Transverse colon (tissue), 4 donors: ENCODE measurements at regions of chr7 and their contacts with region 1.

Region 1: DNA sequence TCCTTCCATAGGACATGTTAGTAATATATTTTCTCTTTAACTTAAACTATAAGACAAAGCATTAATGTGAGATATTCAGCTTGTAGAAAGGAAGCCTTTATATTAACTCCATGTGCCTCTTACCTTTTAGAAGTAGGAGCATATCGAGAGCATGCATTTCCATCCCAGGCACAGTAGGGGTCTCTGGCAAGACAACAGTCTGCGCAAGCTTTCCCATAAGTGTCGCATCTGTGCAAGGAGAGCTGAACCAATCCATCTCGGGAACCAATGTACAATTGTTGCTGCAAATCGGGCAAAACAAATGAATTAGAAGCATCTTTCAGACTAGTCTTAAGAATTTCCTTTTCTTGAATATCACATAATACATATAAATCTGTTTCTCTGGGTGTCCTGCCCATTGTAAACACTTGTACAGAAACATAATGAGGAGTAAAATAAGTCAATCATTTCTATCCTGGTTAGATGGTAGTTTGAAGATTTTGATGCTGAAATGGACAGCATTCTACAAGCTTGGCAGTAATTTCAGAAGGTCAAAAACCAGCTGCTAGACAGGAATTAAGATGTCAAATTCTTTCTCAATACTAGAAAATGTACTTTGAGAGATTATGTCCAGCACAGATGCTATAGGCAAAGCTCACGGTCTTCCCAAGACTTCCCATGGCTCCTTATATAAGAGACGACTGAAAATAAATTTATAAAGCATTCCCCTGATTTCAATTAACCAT is 171.8 kb downstream of the SEMA3D start:
- DNase-seq: no peak
- H3K4me3 ChIP-seq: no peak overlapping the region
- H3K27ac ChIP-seq: no peak overlapping the region
- H3K4me1 ChIP-seq: no peaks in the 10 kb centered on the region
- H3K27me3 ChIP-seq: no peaks in the 10 kb centered on the region
- CTCF ChIP-seq: no peak
- EP300 ChIP-seq: no peak
- POLR2A ChIP-seq: no peak

Region 2: GRCh38 chr7:86534641-86535040 is 1519.5 kb after region 1 on chr7:
- in situ Hi-C with region 1: no loop called
- intact Hi-C with region 1: loop called (anchors 5 kb)
- DNase-seq: no peak
- H3K4me3 ChIP-seq: no peak overlapping the region
- H3K27ac ChIP-seq: no peak overlapping the region
- H3K4me1 ChIP-seq: no peaks in the 10 kb centered on the region
- H3K27me3 ChIP-seq: no peaks in the 10 kb centered on the region
- CTCF ChIP-seq: no peak
- EP300 ChIP-seq: no peak
- POLR2A ChIP-seq: no peak